ENCODE measurements at regions of chr7 and their contacts with region 1.

Region 1: DNA sequence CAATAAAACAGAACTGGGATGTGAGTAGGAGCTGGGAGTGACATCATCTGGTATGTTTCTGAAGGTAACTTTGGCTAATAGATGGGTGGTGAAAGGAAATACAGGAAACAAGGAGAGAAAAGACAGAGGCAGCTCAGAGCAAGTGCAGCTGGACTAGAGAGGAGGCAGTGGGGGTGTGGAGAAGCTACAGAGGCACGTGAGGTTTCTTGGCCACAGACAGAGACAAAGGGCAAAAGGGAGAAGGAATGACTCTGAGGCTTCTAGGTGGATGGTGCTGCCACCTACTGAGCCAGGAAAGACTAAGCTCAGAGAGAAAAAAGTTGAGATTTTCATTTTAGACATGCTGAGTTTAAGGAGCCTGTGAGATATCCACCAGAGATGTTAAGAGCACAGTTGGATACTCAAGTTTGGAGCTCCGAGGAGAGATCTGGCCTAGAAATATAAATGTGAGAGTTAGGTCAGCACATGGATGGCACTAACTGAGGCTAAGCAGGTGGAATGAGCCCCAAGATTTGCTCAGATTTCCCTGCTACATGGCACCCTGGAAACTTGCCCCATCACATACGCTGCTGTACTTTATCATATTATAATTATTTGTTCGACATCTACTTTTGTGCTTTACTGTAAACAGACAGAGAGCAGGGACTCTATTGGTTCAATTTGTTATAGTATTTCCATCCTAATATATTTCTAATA is 293.0 kb upstream of the IMMP2L start:
- DNase-seq: peak; percentile 62
- ATAC-seq: peak; percentile 79
- H3K4me3 ChIP-seq: no peak overlapping the region
- H3K27ac ChIP-seq: no peak overlapping the region
- H3K4me1 ChIP-seq: no peaks in the 10 kb centered on the region
- H3K27me3 ChIP-seq: no peaks in the 10 kb centered on the region
- CTCF ChIP-seq: peak; percentile 71

Region 2: DNA sequence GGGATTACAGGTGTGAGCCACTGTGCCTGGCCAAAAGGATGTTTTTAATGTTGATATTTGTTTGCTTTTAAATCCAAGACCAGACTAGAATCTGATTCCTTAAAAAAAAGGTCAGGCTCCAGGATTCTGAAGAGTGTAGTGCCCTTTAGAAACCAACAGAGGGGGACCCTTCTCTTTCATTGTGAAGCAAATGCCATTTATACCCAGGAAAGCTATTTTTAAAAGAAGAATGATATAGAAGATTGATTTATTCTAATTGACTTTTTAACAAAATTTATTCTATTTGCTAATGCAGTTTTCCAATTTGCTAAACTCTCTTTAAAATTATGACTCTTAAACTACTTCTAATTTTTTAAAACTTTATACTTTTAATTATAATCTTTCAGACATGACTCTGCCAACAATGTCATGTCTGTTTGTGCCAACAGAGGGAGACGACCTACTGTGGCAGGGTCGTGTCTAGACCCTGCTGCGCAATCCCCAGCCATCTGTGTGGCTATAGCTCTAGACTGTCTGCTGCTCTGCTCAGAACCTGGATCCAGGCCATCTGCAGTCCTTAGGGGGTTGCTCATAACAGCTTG is 92.0 kb before region 1 on chr7:
- CTCF ChIA-PET with region 1: interaction called, 38 read pairs
- POLR2A ChIA-PET with region 1: no interaction called
- intact Hi-C with region 1: loop called (anchors 1 kb)
- DNase-seq: peak; percentile 55
- ATAC-seq: peak; percentile 84
- H3K4me3 ChIP-seq: no peak overlapping the region
- H3K27ac ChIP-seq: no peak overlapping the region
- H3K4me1 ChIP-seq: peaks cover 6% of the 10 kb centered on the region
- H3K27me3 ChIP-seq: no peaks in the 10 kb centered on the region
- CTCF ChIP-seq: peak; percentile 71

Region 3: GRCh38 chr7:111803015-111803758 is 52.1 kb before region 1 on chr7:
- CTCF ChIA-PET with region 1: interaction called, 14 read pairs
- POLR2A ChIA-PET with region 1: no interaction called
- intact Hi-C with region 1: no loop called
- DNase-seq: peak; percentile 60
- ATAC-seq: peak; percentile 93
- H3K4me3 ChIP-seq: no peak overlapping the region
- H3K27ac ChIP-seq: peak overlapping the region; percentile 18; the same call in 1 of the 2 replicates
- H3K4me1 ChIP-seq: peaks cover 12% of the 10 kb centered on the region
- H3K27me3 ChIP-seq: no peaks in the 10 kb centered on the region
- CTCF ChIP-seq: no peak

Measured in PC-3 (cell line).